Activated naive CD4-positive, alpha-beta T cell treated with anti-CD3 and anti-CD28 coated beads for 36 hours (primary cell): ENCODE measurements at regions of chr2 and their contacts with region 1.

Region 1: DNA sequence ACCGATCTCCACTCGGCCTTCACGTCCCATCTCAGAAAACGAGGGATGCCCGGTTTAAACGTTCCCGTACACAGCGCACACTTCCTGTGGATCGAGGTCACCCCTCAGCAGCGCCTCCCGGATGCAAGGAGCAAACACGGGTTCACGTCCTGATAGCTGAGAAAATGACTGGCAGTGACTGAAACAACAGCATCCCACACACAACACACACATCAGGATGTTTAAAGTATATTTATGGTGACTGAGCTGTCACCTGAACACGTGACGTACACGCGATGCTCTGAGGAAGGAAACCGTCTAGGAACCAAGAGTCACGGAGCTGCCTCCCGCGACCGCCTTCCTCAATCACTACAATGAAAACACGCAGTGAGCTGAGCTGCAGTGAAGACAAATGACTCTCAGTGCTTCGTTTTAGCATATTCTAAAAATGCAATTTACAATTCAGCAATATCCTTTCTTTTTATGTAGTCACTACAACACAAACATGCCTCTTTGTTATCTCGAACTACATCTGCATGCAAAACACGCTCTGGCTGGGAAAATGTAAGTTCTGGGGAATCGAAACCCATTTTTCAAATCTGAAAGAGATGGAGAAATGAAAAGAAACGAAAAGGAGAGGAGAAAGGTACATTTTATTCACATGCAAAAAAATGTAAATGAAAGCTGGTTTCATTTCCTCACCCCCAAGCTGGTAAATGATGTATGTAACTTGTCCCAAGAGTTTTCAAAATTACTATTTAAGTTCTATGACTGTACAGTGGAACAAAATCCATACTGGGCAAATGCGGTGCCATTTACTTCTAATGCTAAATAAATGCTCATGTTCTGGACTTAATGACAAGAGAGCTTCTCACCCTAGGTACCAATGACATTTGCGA is 19.8 kb downstream of the HDAC4 start:
- DNase-seq: peak; percentile 85
- H3K4me3 Mint-ChIP-seq: peak overlapping the region; percentile 73
- H3K27ac Mint-ChIP-seq: peak overlapping the region; percentile 95
- H3K4me1 Mint-ChIP-seq: peaks cover 44% of the 10 kb centered on the region
- H3K27me3 Mint-ChIP-seq: no peaks in the 10 kb centered on the region

Region 2: DNA sequence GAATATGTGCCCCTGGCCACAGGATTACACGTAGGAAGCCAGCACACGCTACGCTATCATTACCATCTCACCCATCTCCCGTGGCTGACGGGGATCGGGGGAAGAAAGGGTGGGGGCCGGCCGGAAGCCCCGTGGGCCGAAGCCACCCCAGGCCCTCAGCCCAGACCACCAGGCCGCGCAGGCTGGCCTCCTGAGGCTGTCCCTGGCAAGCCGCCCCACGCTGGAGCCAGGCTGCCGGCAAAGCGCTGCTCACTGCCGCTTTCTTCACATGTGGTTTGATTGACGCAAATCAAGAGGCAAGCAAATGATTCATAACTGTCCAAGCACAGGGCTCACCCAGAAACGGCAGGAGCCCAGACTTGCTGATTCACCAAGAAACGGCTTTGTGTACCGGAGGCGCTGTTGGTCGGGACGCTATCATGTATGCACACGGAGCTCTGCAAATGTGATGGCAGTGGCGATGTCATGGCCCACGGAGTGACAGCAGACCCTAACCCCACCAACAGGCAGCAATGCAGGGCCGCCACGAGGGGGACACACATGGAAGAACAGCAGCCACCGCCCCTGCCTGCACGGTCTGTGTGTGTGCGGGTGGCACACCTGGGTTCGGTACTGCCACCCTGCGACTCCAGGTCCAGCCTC is 105.9 kb before region 1 on chr2:
- CTCF ChIA-PET with region 1: interaction called, 4 read pairs
- intact Hi-C with region 1: loop called (anchors 1 kb)
- DNase-seq: peak; percentile 93
- H3K4me3 Mint-ChIP-seq: peak overlapping the region; percentile 51
- H3K27ac Mint-ChIP-seq: peak overlapping the region; percentile 77
- H3K4me1 Mint-ChIP-seq: peaks cover 51% of the 10 kb centered on the region
- H3K27me3 Mint-ChIP-seq: peaks cover 24% of the 10 kb centered on the region

Region 3: GRCh38 chr2:239298116-239298804 is 82.8 kb before region 1 on chr2:
- CTCF ChIA-PET with region 1: interaction called, 7 read pairs
- intact Hi-C with region 1: loop called (anchors 1 kb)
- DNase-seq: peak; percentile 91
- H3K4me3 Mint-ChIP-seq: peak overlapping the region; percentile 67
- H3K27ac Mint-ChIP-seq: peak overlapping the region; percentile 74
- H3K4me1 Mint-ChIP-seq: peaks cover 74% of the 10 kb centered on the region
- H3K27me3 Mint-ChIP-seq: peaks cover 2% of the 10 kb centered on the region

Region 4: GRCh38 chr2:239326831-239327535 is 54.1 kb before region 1 on chr2:
- CTCF ChIA-PET with region 1: interaction called, 7 read pairs
- intact Hi-C with region 1: loop called (anchors 1 kb)
- DNase-seq: peak; percentile 94
- H3K4me3 Mint-ChIP-seq: peak overlapping the region; percentile 24
- H3K27ac Mint-ChIP-seq: peak overlapping the region; percentile 81
- H3K4me1 Mint-ChIP-seq: peaks cover 79% of the 10 kb centered on the region
- H3K27me3 Mint-ChIP-seq: no peaks in the 10 kb centered on the region

Region 5: GRCh38 chr2:239544143-239544917 is 163.3 kb after region 1 on chr2:
- CTCF ChIA-PET with region 1: no interaction called
- intact Hi-C with region 1: loop called (anchors 1 kb)
- DNase-seq: no peak
- H3K4me3 Mint-ChIP-seq: no peak overlapping the region
- H3K27ac Mint-ChIP-seq: no peak overlapping the region
- H3K4me1 Mint-ChIP-seq: peaks cover 35% of the 10 kb centered on the region
- H3K27me3 Mint-ChIP-seq: peaks cover 11% of the 10 kb centered on the region